ENCODE measurements at regions of chr10 and their contacts with region 1.

Region 1: DNA sequence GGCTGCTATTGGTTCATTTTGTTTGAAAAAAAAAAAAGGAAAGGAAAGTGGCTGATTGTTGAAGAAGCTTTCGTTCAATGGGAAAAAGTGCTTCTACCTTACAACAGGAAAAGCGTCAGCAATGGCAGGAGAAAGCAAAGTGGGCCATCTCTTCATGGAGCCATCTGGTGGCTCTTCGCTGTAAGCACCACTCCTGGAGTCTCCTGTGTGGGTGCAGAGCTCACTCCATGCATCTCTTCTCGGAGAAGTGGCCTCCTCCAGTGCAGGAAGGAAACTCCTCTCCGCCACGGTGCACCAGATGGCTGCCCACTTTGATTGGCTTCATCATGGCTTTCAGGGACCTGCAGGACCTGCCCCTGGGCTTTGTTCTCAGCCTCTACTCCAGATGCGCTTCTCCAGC is 250.9 kb downstream of the PTEN start:
- DNase-seq: peak; percentile 47
- ATAC-seq: no peak
- H3K4me3 Mint-ChIP-seq: no peak overlapping the region
- H3K27ac Mint-ChIP-seq: no peak overlapping the region
- H3K4me1 Mint-ChIP-seq: peaks cover 9% of the 10 kb centered on the region
- H3K27me3 Mint-ChIP-seq: peaks cover 15% of the 10 kb centered on the region

Region 2: DNA sequence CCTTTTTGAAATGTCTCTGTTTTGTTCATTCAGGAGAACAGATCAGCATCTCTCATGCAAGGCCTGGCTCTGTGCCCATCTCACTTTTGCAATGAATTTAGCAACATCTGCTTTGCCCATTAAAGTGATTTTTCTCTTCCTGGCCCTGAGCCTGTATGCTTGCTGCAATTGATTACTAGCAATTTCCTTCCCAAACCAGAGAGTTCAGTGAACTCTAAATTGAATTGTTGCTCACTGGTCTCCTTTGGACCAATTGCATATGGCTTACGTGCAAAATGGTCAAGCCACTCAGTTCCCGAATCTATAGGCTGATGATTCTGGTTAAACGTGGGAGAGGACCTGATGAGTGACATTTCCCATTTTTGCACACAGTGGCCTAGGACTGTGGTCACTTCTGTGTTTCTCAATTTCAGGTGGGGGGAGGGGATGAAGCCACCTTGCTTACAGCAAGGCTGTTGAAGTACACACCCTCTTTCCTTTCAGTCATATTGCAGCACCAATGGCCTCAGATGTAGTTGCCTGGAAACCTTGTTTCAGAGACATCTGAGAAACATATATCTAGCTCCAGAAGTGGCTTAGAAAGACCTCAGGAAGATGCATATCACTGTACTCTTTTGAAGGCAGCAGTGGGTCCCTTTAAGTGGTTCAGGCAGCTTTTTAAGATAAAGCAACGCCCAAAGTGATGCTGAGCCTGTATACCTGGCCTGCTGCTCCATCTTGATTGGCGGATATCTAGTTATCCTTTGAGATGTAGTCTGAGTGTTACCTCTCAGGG is 49.6 kb before region 1 on chr10:
- CTCF ChIA-PET with region 1: interaction called, 9 read pairs
- POLR2A ChIA-PET with region 1: interaction called, 3 read pairs
- intact Hi-C with region 1: loop called (anchors 1 to 2 kb)
- DNase-seq: peak; percentile 52
- ATAC-seq: peak; percentile 49
- H3K4me3 Mint-ChIP-seq: no peak overlapping the region
- H3K27ac Mint-ChIP-seq: no peak overlapping the region
- H3K4me1 Mint-ChIP-seq: peaks cover 69% of the 10 kb centered on the region
- H3K27me3 Mint-ChIP-seq: peaks cover 24% of the 10 kb centered on the region

Region 3: DNA sequence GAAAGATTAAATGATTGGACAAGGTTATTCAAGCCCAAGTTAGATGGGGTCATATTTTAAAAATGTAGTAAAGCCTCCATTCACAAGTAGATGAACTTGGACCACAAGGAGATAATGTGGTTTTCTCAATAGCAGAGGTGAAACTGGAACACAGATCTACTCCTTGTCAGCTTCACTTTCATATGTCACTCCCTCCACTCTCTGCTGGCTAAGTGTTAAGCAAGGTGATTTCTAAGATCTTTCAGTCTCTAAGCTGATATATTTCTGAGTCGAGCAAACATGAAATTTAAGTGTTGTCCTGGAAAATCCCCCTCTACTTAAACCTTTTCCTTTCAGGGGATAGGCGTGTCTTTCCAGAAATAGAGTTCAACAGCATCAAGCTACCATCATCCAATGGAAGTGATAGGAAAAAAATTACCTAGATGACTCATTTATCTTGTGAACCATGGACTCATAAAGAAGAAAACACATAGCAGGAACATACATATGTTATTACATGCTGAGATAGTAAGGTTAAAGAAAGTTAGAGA is 24.0 kb after region 1 on chr10:
- CTCF ChIA-PET with region 1: no interaction called
- POLR2A ChIA-PET with region 1: no interaction called
- intact Hi-C with region 1: no loop called
- DNase-seq: no peak
- ATAC-seq: peak; percentile 97
- H3K4me3 Mint-ChIP-seq: no peak overlapping the region
- H3K27ac Mint-ChIP-seq: no peak overlapping the region
- H3K4me1 Mint-ChIP-seq: peaks cover 9% of the 10 kb centered on the region
- H3K27me3 Mint-ChIP-seq: no peaks in the 10 kb centered on the region

Region 4: GRCh38 chr10:88194041-88194887 is 79.9 kb after region 1 on chr10:
- CTCF ChIA-PET with region 1: no interaction called
- POLR2A ChIA-PET with region 1: no interaction called
- intact Hi-C with region 1: loop called in 1 of 2 experiments (anchors 5 kb)
- DNase-seq: peak; percentile 31
- ATAC-seq: peak; percentile 96
- H3K4me3 Mint-ChIP-seq: no peak overlapping the region
- H3K27ac Mint-ChIP-seq: peak overlapping the region; percentile 27
- H3K4me1 Mint-ChIP-seq: peaks cover 38% of the 10 kb centered on the region
- H3K27me3 Mint-ChIP-seq: no peaks in the 10 kb centered on the region

Region 5: DNA sequence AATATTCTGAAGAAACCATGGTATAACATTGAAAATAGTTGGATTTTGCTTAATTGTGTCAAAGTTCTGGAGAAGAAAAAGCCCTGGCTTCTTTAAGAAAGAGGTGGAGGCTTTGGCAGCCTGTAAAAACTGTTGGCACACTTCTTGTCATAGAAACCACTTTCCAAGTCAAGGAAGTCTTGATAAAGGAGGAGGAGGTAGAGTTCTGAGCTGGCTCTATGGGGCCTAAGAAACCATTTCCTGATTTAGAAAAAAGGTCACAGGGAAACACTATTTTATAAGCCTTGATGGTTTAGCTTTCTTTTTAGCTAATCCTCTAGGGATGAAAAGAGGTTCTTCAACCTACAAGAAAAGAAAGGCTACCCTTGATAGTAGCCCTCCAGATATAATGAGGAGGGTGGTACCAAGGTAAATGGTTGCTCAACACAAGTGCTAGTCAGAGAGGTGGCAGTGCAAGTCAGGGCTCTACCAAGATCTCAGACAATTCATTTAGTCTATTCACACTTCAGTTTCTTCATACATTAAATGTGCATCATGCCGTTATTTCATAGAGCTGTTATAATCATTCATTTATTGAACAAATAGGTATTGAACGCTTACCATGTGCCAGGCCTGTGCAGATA is 121.9 kb after region 1 on chr10:
- CTCF ChIA-PET with region 1: no interaction called
- POLR2A ChIA-PET with region 1: no interaction called
- intact Hi-C with region 1: no loop called
- DNase-seq: no peak
- ATAC-seq: no peak
- H3K4me3 Mint-ChIP-seq: no peak overlapping the region
- H3K27ac Mint-ChIP-seq: no peak overlapping the region
- H3K4me1 Mint-ChIP-seq: peaks cover 3% of the 10 kb centered on the region
- H3K27me3 Mint-ChIP-seq: no peaks in the 10 kb centered on the region

Region 6: DNA sequence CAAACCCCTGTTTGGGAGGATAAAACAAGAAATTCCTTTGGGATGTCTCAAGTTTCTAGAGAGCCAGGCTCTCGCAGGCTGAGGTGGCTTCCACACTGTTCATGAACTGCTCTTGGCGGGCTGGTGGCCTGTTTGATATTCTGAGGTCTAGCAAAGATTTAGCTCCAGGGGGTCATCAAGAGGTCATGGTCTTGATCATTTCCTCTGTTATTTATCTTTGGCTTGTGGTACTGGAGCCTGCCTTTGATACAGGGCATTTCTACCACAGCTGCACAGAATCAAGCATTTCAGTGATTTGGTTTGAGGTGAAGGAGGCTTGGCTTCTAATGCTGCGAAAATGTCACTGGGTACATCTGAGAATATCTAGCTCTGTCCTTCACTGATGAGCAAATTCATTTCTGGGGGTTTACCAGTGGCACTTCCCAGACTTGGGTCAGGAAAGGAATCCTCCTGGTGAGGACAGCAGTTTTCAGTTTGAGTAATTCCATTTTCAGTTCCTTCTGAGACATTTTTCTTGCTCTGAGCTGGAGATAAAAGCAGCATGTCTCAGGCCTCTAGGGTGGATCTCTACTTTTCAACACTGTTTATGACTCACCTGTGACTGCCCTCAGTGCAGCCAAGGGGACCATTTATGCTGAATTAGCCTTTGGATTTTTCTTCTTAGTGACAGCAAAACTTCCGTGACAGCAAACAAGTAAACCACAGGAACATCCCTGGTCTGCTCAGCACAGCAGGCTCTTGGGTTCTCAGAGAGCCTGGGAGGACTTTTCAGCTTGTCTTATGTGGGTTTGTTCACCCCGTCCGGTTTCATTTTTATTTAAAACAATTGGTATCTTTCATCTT is 156.7 kb after region 1 on chr10:
- CTCF ChIA-PET with region 1: no interaction called
- POLR2A ChIA-PET with region 1: no interaction called
- intact Hi-C with region 1: loop called (anchors 1 kb)
- DNase-seq: peak; percentile 65
- ATAC-seq: peak; percentile 93
- H3K4me3 Mint-ChIP-seq: no peak overlapping the region
- H3K27ac Mint-ChIP-seq: peak overlapping the region; percentile 64
- H3K4me1 Mint-ChIP-seq: peaks cover 37% of the 10 kb centered on the region
- H3K27me3 Mint-ChIP-seq: peaks cover 3% of the 10 kb centered on the region